RWPE1 (cell line): ENCODE measurements at regions of chr6 and their contacts with region 1.

Region 1: GRCh38 chr6:135144673-135145062 is 36.4 kb upstream of the MYB start:
- DNase-seq: no peak
- H3K27ac ChIP-seq: no peak overlapping the region
- CTCF ChIP-seq: no peak

Region 2: DNA sequence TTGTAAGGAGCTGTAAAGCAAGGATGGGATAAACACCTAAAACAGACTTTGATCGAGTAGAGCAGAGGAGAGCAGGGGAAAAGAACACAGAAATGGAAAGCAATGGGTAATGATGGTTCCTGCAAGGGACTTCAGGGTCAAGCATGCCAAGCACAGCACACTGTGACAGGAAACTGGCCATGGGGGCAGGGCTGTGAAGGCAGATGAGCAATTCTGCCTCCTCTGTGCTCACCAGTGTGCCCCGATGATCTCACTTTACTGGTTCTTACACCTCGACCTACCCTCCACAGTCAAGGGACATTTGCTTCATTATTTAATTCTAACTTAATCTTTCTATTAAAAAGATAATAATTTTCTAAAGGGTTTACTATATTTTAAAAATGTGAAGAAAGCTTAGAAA is 14.9 kb after region 1 on chr6:
- CTCF ChIA-PET with region 1: interaction called, 10 read pairs
- POLR2A ChIA-PET with region 1: no interaction called
- DNase-seq: no peak
- H3K27ac ChIP-seq: no peak overlapping the region
- CTCF ChIP-seq: no peak